Activated CD4-positive, alpha-beta memory T cell treated with anti-CD3 and anti-CD28 coated beads for 36 hours (primary cell): ENCODE measurements at regions of chr3 and their contacts with region 1.

Region 1: DNA sequence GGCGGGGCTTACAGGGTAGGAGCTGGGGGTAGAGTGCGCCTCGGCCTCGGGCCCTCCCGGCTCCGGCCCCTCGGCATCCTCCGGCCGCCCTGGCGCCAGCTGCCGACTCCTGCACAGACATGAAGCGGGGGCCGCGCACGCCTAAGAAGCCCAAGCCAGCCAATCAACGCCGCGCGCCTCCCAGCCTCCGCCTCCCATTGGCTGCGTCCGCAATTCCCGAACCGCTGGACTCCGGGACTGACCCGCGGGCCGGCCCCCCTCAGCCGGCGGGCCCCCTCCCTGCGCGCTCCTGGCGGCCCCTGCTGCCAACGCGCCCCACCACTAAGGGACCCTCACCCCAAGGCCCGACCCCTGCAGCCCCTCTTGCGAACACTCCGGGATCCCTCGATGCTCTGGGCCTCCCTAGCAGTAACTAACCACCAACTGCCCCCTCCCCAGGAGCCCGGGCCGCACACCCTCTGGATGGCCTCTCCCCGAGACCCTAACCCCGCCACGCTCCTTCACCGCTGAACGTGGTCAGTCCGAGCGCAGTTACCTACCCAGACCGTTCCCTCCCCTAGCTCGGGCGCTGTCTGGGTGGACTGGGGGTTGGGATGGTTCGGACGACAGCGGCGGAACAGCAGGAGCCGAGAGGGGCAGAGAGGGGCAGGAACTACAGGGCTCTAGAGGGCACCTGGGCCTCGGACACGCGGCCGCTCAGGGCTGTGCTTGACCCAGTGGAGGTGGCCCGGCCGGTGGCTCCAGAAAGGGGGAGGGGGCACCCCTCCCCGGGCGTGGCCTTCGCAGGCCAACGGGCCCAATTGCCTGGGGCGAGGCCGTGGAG is 5.0 kb downstream of the GATA2 start:
- DNase-seq: peak; percentile 52
- H3K4me3 Mint-ChIP-seq: no peak overlapping the region
- H3K27ac Mint-ChIP-seq: no peak overlapping the region
- H3K4me1 Mint-ChIP-seq: peaks cover 42% of the 10 kb centered on the region
- H3K27me3 Mint-ChIP-seq: peaks cover 71% of the 10 kb centered on the region

Region 2: GRCh38 chr3:127734754-127735473 is 753.1 kb before region 1 on chr3:
- CTCF ChIA-PET with region 1: no interaction called
- POLR2A ChIA-PET with region 1: no interaction called
- intact Hi-C with region 1: no loop called
- DNase-seq: no peak
- H3K4me3 Mint-ChIP-seq: no peak overlapping the region
- H3K27ac Mint-ChIP-seq: no peak overlapping the region
- H3K4me1 Mint-ChIP-seq: no peaks in the 10 kb centered on the region
- H3K27me3 Mint-ChIP-seq: peaks cover 14% of the 10 kb centered on the region

Region 3: GRCh38 chr3:128095222-128095703 is 392.8 kb before region 1 on chr3:
- CTCF ChIA-PET with region 1: no interaction called
- POLR2A ChIA-PET with region 1: no interaction called
- intact Hi-C with region 1: no loop called
- DNase-seq: peak; percentile 84
- H3K4me3 Mint-ChIP-seq: no peak overlapping the region
- H3K27ac Mint-ChIP-seq: no peak overlapping the region
- H3K4me1 Mint-ChIP-seq: peaks cover 4% of the 10 kb centered on the region
- H3K27me3 Mint-ChIP-seq: no peaks in the 10 kb centered on the region

Region 4: GRCh38 chr3:128447561-128448013 is 40.4 kb before region 1 on chr3:
- CTCF ChIA-PET with region 1: interaction called, 3 read pairs
- POLR2A ChIA-PET with region 1: interaction called, 3 read pairs
- intact Hi-C with region 1: loop called (anchors 2 kb)
- DNase-seq: peak; percentile 89
- H3K4me3 Mint-ChIP-seq: peak overlapping the region; percentile 24
- H3K27ac Mint-ChIP-seq: peak overlapping the region; percentile 89
- H3K4me1 Mint-ChIP-seq: peaks cover 39% of the 10 kb centered on the region
- H3K27me3 Mint-ChIP-seq: no peaks in the 10 kb centered on the region

Region 5: DNA sequence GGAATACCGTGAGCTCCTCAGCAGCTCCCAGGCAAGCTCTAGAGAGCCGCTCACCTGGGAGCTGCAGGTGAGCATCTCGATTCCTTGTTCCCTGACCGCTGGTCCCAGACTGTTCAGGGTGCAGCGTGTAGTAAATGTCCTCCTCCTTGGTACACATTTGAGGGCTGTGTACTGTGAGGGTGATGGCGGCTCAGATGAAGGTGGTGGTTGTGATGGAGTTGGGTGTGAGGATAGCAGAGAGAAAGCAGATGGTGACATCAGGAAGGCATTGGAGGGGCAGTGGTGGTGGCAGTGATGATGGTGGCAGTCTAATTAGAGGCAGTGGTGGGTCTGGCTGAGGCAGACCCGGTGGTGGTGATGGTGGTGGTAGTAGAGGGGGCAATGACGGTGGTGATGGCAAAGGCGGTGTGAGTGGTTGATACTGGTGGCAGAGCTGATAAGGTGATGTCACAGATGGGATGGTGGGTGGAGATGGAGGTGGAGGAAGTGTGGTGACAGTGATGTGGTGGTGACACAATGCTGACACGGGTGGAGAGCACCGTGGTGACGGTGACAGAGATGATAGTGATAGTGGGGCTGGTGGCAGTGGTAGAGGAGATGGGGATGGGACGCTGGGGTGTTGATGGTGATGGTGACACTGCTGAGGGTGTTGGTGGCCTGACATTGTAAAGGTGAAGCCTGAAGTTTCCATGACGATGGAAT is 21.0 kb before region 1 on chr3 and contains the start of gene DNAJB8:
- CTCF ChIA-PET with region 1: no interaction called
- POLR2A ChIA-PET with region 1: no interaction called
- intact Hi-C with region 1: loop called (anchors 2 kb)
- DNase-seq: peak; percentile 59
- H3K4me3 Mint-ChIP-seq: no peak within 1 kb of the TSS
- H3K27ac Mint-ChIP-seq: no peak within 1 kb of the TSS
- H3K4me1 Mint-ChIP-seq: peaks cover 9% of the 10 kb centered on the region
- H3K27me3 Mint-ChIP-seq: peaks cover 21% of the 10 kb centered on the region
- total RNA-seq, gene DNAJB8: not detected

Region 6: DNA sequence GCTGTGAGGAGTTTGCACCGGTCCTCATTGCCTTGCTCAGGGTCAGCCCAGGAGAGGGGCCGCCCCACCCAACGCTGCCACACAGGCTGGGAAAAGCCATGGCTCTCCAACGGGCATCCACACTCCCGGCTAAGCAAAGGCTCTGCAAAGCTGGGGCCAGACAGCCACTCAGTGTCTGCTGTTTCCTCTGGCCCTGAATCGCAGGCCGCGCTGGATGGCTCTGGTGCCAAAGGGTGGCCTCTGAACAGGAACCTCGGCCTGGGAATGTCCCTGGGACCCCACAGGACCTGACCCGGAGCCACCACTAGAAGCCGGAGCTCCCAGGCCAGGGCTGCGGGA is 119.7 kb after region 1 on chr3:
- CTCF ChIA-PET with region 1: interaction called, 5 read pairs
- POLR2A ChIA-PET with region 1: no interaction called
- intact Hi-C with region 1: loop called (anchors 5 kb)
- DNase-seq: no peak
- H3K4me3 Mint-ChIP-seq: no peak overlapping the region
- H3K27ac Mint-ChIP-seq: no peak overlapping the region
- H3K4me1 Mint-ChIP-seq: peaks cover 2% of the 10 kb centered on the region
- H3K27me3 Mint-ChIP-seq: no peaks in the 10 kb centered on the region

Region 7: GRCh38 chr3:128844502-128844901 is 356.5 kb after region 1 on chr3:
- CTCF ChIA-PET with region 1: no interaction called
- POLR2A ChIA-PET with region 1: no interaction called
- intact Hi-C with region 1: no loop called
- DNase-seq: no peak
- H3K4me3 Mint-ChIP-seq: no peak overlapping the region
- H3K27ac Mint-ChIP-seq: no peak overlapping the region
- H3K4me1 Mint-ChIP-seq: peaks cover 18% of the 10 kb centered on the region
- H3K27me3 Mint-ChIP-seq: no peaks in the 10 kb centered on the region